H1 (cell line): ENCODE measurements at regions of chr10 and their contacts with region 1.

Region 1: GRCh38 chr10:29001801-29002200 is 287.1 kb upstream of the LYZL1 start:
- DNase-seq: no peak
- H3K4me3 ChIP-seq: no peak overlapping the region
- H3K27ac ChIP-seq: no peak overlapping the region
- H3K4me1 ChIP-seq: no peaks in the 10 kb centered on the region
- H3K27me3 ChIP-seq: no peaks in the 10 kb centered on the region
- CTCF ChIP-seq: no peak
- EP300 ChIP-seq: no peak
- POLR2A ChIP-seq: no peak
- RAD21 ChIP-seq: no peak

Region 2: DNA sequence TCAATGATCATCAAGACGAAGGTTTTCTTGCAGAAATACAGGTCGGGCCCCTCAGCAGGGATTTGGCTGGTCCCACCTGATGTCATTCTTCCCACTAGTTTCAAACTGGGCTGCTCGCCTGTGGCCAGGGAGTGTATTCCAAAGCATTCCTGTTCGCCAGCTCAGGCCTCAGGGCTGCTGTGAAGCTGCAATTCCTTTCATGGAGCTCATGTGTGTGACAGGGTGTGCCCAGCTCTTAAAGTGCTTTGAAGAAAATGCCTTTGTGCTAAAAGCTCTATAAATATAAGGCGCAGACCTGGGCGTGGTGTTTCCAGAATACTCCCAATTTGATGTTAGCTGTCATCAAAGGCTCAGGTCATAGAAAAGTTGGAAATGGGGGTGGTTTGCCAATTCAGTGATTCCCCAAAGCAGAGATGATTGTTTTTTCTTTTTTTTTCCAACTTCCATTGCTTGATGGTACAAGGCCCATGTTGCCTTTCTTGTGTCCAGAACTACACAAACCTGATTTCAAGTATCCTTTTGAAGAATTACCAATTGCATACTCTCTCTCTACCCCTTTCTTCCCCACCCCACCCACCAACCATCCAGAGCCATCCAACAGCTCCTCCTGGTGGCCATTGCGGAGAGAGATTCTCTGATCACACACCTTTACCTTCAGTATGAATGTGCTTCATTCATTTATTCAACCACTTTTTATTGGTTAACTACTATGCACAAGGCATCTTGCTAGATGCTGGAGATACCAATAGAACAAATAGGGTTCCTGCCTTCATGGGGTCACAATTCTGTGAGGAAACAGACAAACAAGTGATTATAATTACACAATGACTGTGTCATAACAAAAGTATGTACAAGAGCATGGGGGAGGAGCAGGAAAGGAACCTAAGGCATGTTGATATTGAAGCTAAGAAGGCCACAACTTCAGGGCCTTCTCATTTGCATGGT is 10.2 kb before region 1 on chr10:
- CTCF ChIA-PET with region 1: interaction called, 18 read pairs
- POLR2A ChIA-PET with region 1: no interaction called
- DNase-seq: peak; percentile 17 to 83
- H3K4me3 ChIP-seq: no peak overlapping the region
- H3K27ac ChIP-seq: no peak overlapping the region
- H3K4me1 ChIP-seq: no peaks in the 10 kb centered on the region
- H3K27me3 ChIP-seq: no peaks in the 10 kb centered on the region
- CTCF ChIP-seq: peak; percentile 67 to 88 (median 86)
- EP300 ChIP-seq: no peak
- POLR2A ChIP-seq: no peak
- RAD21 ChIP-seq: peak; percentile 97 to 99